ENCODE measurements at regions of chr18 and their contacts with region 1.

Region 1: GRCh38 chr18:9926223-9926894 is 12.5 kb downstream of the VAPA start:
- DNase-seq: no peak
- H3K4me3 Mint-ChIP-seq: no peak overlapping the region
- H3K27ac Mint-ChIP-seq: no peak overlapping the region
- H3K4me1 Mint-ChIP-seq: peaks cover 50% of the 10 kb centered on the region
- H3K27me3 Mint-ChIP-seq: no peaks in the 10 kb centered on the region

Region 2: DNA sequence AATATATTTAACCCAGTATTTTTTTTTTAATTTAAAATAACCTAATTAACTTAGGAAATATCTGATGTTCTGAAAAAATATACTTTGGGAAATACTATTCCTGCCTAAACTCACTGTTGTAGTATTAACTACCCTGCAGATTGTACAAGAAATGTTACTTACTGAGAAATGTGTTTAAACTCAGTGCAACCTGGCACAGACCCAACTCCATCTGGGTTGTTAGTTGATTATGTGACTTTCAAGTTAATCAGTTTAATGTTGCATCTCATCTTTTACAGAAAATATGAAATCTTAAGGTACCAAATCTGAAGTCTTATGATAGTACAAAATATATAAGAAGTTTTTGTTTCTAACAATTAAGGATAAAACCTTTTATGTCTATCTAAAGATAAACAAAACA is 14.7 kb after region 1 on chr18:
- intact Hi-C with region 1: loop called (anchors 2 kb)
- DNase-seq: no peak
- H3K4me3 Mint-ChIP-seq: no peak overlapping the region
- H3K27ac Mint-ChIP-seq: no peak overlapping the region
- H3K4me1 Mint-ChIP-seq: peaks cover 9% of the 10 kb centered on the region
- H3K27me3 Mint-ChIP-seq: no peaks in the 10 kb centered on the region

Region 3: DNA sequence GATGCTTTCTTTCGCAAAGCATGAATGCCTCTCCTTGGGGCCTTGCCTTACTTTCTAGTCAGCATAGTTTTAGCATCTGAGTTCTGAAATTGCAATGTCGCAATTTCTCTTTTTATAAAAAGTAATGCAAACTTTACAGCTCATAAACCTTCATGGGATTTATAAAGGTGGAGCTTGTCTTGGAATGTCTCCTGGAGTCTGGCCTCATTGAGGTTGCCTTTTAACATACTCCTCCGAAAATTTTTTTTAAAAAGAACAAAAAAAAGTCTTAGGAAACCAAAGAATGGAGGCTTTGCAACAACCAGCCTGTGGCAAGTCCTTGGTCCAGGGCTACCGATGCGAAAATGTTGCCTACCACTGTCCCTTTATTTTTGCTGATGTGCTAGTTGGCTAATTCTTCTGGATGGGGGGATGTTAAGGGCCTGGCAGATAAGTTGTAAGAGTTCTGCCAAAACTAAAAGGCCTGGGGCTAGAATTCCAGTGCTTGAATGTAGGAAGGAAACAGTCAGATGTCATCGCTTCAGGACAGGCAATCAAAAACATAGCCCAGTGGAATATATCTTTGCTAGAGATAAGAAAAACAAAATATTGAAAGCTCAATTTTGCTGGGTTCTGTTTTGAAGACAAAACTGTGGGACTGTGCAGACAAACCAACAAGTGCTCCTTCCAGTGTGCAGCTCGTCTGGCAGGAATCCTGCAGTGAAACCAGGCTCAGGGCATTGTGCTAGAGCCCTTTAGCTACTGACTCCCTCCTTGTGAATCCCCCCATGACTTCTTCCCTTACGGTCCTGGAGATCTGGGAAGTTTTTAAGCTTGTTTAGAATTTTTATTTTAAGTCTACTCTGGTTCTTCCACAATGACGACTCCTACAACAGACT is 1010.1 kb after region 1 on chr18:
- intact Hi-C with region 1: no loop called
- DNase-seq: no peak
- H3K4me3 Mint-ChIP-seq: no peak overlapping the region
- H3K27ac Mint-ChIP-seq: no peak overlapping the region
- H3K4me1 Mint-ChIP-seq: no peaks in the 10 kb centered on the region
- H3K27me3 Mint-ChIP-seq: peaks cover 4% of the 10 kb centered on the region

Measured in activated T-helper 1 cell treated with anti-CD3 and anti-CD28 coated beads, Interleukin-12 subunit alpha, Interleukin-12 subunit beta, Interleukin-2, Interleukin-4 antibody, amounts not matched to agents 30 ng/mL and 10 ng/mL and 1 ng/mL, durations not matched to agents 14 hours and 24 hours and 36 hours (primary cell).